Heart left ventricle (tissue), 16 donors: ENCODE measurements at regions of chr1 and their contacts with region 1.

Region 1: GRCh38 chr1:19390901-19391595 is 78.9 kb downstream of the SLC66A1 start:
- DNase-seq: peak in 3 of 5 donors; percentile 59 to 70 (median 62)
- ATAC-seq: peak in 3 of 4 donors; percentile 19 to 55 (median 55)
- H3K4me3 ChIP-seq: peak overlapping the region in 8 of 12 donors; percentile 2 to 38 (median 26)
- H3K27ac ChIP-seq: peak overlapping the region; percentile 47 to 84 (median 72)
- H3K4me1 ChIP-seq: peaks cover 3 to 79% (median 51%) of the 10 kb centered on the region in 12 donors
- H3K27me3 ChIP-seq: no peaks in the 10 kb centered on the region
- CTCF ChIP-seq: peak; percentile 60 to 88 (median 74)
- POLR2A ChIP-seq: no peak

Region 2: DNA sequence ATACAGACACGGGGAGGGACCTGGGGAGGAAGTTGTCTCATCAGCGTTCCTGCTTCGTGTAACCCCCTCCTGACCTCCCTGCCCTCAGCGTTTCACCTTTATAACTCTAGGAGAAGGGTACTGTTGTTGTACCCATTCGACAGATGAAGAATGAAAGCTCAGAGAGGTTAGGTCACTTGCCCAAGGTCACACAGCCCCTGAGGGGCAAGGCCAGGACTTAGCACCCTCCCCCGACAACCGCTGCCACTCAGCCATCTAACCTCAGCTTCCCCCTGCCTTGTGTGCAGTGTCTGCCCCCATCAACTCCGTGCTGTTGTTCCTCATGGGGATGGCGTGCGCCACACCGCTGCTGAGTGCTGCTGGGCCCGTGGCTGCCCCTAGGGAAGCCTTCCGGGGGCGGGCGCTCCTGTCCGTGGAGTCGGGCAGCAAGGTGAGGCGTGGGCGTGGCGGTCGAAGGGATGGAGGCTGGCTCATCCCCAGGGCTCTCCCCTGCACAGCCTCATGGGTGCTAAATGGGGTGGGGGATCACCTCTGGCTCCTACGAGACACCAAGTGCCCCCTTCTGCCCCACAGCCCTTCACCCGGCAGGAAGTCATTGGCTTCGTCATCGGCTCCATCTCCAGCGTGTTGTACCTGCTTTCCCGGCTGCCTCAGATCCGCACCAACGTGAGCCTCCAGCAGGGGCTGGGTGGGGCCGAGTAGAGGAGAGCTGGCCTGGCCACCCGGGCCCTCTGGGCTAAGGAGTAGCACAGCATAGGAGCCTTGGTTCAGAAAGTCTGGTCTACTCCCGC is 64.9 kb before region 1 on chr1:
- intact Hi-C with region 1: no loop called
- DNase-seq: peak in 2 of 5 donors; percentile 15 to 37
- ATAC-seq: no peak
- H3K4me3 ChIP-seq: no peak overlapping the region
- H3K27ac ChIP-seq: no peak overlapping the region
- H3K4me1 ChIP-seq: no peaks in the 10 kb centered on the region
- H3K27me3 ChIP-seq: no peaks in the 10 kb centered on the region
- CTCF ChIP-seq: no peak
- POLR2A ChIP-seq: no peak

Region 3: DNA sequence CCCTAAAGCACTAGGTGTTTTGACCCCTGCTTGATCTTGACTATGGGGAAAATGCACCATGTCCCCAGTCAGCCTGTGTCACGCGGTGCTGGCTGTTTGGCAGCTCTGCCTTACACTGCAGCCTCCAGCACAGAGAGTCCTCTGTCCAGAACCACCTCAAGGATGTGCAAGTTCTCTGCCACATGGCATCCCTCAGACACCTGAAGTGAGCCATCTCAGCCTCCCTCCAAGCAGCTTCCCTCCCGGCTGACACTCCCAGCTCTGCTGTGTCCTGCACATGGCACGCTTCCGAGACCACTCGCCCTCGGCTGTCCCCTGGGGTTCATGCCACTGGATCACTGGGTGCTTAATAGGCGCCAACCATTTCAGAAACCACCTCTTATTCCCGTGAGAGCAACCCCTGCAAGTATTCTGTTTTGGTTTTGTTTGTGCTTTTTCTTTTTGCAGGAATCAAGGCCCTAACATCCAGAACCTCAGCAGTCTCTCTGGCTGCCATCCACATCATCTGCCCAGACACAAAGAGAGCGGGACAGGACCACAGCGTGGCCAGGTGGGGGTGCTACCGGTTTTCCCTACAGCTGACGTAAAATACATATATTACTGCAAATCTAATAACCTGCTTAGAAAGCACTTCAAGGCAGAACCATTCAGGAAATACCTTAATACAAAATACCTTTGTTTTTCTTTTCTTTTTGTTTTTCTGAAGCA is 48.6 kb after region 1 on chr1:
- intact Hi-C with region 1: loop called in 3 of 10 experiments (anchors 5 to 10 kb)
- DNase-seq: peak in 3 of 5 donors; percentile 49 to 84 (median 75)
- ATAC-seq: peak; percentile 57 to 71 (median 64)
- H3K4me3 ChIP-seq: no peak overlapping the region
- H3K27ac ChIP-seq: peak overlapping the region; percentile 80 to 97 (median 84)
- H3K4me1 ChIP-seq: peaks cover 55 to 100% (median 94%) of the 10 kb centered on the region in 12 donors
- H3K27me3 ChIP-seq: no peaks in the 10 kb centered on the region
- CTCF ChIP-seq: peak in 10 of 12 donors; percentile 7 to 52 (median 30)
- POLR2A ChIP-seq: no peak

Region 4: GRCh38 chr1:19448491-19449439 is 57.7 kb after region 1 on chr1:
- intact Hi-C with region 1: loop called in 2 of 10 experiments (anchors 5 to 10 kb)
- DNase-seq: peak; percentile 65 to 84 (median 70)
- ATAC-seq: peak in 3 of 4 donors; percentile 50 to 72 (median 59)
- H3K4me3 ChIP-seq: no peak overlapping the region
- H3K27ac ChIP-seq: peak overlapping the region; percentile 43 to 93 (median 70)
- H3K4me1 ChIP-seq: peaks cover 3 to 100% (median 88%) of the 10 kb centered on the region in 12 donors
- H3K27me3 ChIP-seq: no peaks in the 10 kb centered on the region
- CTCF ChIP-seq: no peak
- POLR2A ChIP-seq: no peak

Region 5: GRCh38 chr1:19547814-19548213 is 156.8 kb after region 1 on chr1:
- intact Hi-C with region 1: no loop called
- DNase-seq: no peak
- ATAC-seq: no peak
- H3K4me3 ChIP-seq: no peak overlapping the region
- H3K27ac ChIP-seq: no peak overlapping the region
- H3K4me1 ChIP-seq: peaks cover 0 to 4% (median 0%) of the 10 kb centered on the region in 12 donors
- H3K27me3 ChIP-seq: no peaks in the 10 kb centered on the region
- CTCF ChIP-seq: no peak
- POLR2A ChIP-seq: no peak

Region 6: DNA sequence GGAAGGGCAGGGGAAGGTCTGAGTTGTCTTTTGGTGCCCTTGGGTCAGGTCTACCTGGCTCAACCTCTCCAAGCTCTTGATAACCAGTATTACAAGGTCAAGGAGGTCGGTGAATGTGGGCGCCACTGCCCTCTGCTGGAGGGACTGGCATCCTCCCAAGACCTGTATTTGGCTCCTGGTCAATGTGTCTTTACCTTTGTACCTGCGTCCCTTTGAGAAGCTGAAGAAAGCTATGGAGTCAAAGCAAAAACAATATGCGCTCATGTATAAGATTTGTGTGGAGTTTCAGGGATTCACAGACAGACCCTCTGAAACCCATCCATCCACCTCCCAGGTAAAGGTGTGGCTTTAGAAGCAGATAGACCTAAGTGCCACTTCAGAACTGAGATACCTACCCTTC is 191.3 kb after region 1 on chr1:
- intact Hi-C with region 1: loop called in 5 of 10 experiments (anchors 1 to 10 kb)
- DNase-seq: peak in 4 of 5 donors; percentile 31 to 77 (median 40)
- ATAC-seq: peak in 2 of 4 donors; percentile 62 to 65
- H3K4me3 ChIP-seq: no peak overlapping the region
- H3K27ac ChIP-seq: no peak overlapping the region
- H3K4me1 ChIP-seq: peaks cover 0 to 9% (median 0%) of the 10 kb centered on the region in 12 donors
- H3K27me3 ChIP-seq: no peaks in the 10 kb centered on the region
- CTCF ChIP-seq: peak; percentile 37 to 71 (median 56)
- POLR2A ChIP-seq: no peak

Region 7: GRCh38 chr1:19596714-19597495 is 205.9 kb after region 1 on chr1:
- intact Hi-C with region 1: loop called in 1 of 10 experiments (anchors 5 kb)
- DNase-seq: peak; percentile 97 to 98 (median 98)
- ATAC-seq: peak; percentile 90 to 95 (median 94)
- H3K4me3 ChIP-seq: peak overlapping the region; percentile 63 to 95 (median 88)
- H3K27ac ChIP-seq: peak overlapping the region; percentile 91 to 98 (median 96)
- H3K4me1 ChIP-seq: peaks cover 0 to 51% (median 35%) of the 10 kb centered on the region in 12 donors
- H3K27me3 ChIP-seq: no peaks in the 10 kb centered on the region
- CTCF ChIP-seq: no peak
- POLR2A ChIP-seq: peak in 1 of 2 donors; percentile 74